ENCODE measurements at regions of chr1 and their contacts with region 1.

Region 1: DNA sequence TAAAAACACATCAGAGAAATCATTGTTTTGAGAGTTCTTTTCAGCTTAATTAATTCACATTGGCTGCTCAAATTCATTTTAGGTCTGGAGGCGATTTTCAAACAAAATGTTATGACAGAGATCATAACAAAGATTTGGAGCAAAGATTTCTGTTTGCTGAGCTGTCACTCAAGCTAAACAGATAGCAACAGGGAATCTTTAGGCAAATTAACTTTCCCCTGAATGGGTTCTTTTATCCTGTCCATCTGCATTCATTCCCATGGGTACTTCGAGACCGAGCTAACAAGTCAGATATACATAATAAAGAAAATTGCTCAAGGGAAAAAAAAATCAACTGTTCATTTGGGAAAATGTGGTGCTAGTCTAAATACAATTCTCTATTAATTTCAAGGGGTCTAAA is 30.2 kb upstream of the CA6 start:
- DNase-seq: no peak
- H3K4me3 ChIP-seq: no peak overlapping the region
- H3K27ac ChIP-seq: no peak overlapping the region
- H3K4me1 ChIP-seq: peaks cover 0 to 6% (median 0%) of the 10 kb centered on the region in 4 donors
- H3K27me3 ChIP-seq: no peaks in the 10 kb centered on the region
- CTCF ChIP-seq: no peak
- EP300 ChIP-seq: no peak
- POLR2A ChIP-seq: no peak

Region 2: GRCh38 chr1:8987881-8988617 is 72.6 kb after region 1 on chr1:
- intact Hi-C with region 1: loop called (anchors 5 kb)
- DNase-seq: peak; percentile 59 to 71
- H3K4me3 ChIP-seq: no peak overlapping the region
- H3K27ac ChIP-seq: peak overlapping the region in 3 of 5 donors; percentile 13 to 41 (median 39)
- H3K4me1 ChIP-seq: peaks cover 4 to 20% (median 11%) of the 10 kb centered on the region in 4 donors
- H3K27me3 ChIP-seq: no peaks in the 10 kb centered on the region
- CTCF ChIP-seq: peak in 5 of 7 experiments; percentile 63 to 91 (median 82)
- EP300 ChIP-seq: no peak
- POLR2A ChIP-seq: no peak

Region 3: DNA sequence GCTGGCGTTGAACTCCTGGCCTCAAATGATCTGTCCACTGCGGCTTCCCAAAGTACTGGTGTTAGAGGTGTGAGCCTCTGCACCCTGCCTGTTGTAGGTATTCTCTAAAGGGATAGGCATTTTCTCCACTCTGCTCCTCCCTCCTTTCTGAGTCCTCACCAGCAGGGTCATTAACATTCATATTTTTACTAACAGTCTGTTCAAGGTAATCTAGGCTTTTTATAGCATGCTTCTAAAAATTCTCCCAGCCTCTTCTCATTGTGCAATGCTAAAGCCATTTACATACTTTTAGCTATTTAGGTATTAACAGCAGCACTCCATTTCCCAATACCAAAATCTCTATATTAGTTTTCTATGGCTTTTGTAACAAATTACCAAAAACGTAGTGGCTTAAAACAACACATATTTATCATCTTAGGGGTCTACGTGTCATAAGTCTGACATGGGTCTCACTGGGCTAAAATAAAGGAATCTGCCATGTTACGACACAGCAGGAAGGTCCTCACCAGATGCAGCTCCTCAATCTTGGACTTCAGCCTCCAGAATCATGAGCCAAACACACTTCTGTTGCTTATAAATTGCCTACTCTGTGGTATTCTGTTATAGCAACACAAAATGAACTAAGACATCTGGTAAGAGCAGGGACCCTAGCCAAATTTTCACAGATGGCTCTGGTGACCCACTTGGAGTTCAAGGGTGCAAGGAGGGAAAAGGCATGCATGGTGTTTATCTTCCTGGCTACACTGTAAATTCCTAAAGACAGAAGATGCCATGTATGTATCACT is 113.7 kb after region 1 on chr1:
- intact Hi-C with region 1: no loop called
- DNase-seq: peak in 1 of 2 donors; percentile 41
- H3K4me3 ChIP-seq: no peak overlapping the region
- H3K27ac ChIP-seq: no peak overlapping the region
- H3K4me1 ChIP-seq: no peaks in the 10 kb centered on the region
- H3K27me3 ChIP-seq: no peaks in the 10 kb centered on the region
- CTCF ChIP-seq: no peak
- EP300 ChIP-seq: no peak
- POLR2A ChIP-seq: no peak

Measured in stomach (tissue), 19 donors.